Aorta (tissue), 5 donors: ENCODE measurements at regions of chr17 and their contacts with region 1.

Region 1: DNA sequence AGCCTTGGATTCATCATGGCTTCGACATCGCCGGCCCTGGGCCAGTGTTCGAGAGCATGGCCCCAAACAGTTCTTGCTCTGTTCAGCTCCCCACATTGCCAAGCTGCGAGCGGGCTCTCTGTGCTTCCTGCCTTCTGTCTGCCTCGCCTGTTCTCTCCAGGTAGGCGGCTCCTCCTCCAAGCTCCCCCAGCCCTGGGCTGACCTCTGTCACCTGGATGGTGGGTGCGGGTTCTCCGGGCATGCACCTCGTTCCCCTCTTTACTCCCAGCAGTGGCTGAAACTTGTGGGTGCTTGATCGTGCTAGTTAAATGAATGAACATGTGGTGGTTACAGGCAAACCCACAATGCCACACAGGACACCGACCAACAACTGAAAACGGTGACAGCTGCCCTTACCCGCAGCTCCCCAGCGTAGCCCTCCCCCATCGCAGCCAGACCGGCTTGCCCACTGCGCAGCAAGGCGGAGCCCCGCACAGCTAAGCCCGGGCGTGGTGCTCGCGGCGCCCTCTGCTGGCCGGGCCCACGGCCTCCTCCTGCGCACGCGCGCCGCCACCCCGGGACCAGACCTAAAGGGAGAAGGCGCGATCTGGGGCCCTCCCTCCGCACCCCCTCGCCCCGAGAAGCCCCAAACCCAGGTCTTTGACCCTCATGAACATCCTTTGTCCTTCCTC is 23.0 kb upstream of the EIF1 start:
- DNase-seq: peak; percentile 93 to 95
- ATAC-seq: peak; percentile 95
- H3K4me3 ChIP-seq: peak overlapping the region; percentile 5 to 59
- H3K27ac ChIP-seq: peak overlapping the region in 1 of 2 donors; percentile 85
- H3K4me1 ChIP-seq: no peaks in the 10 kb centered on the region
- H3K27me3 ChIP-seq: no peaks in the 10 kb centered on the region

Region 2: DNA sequence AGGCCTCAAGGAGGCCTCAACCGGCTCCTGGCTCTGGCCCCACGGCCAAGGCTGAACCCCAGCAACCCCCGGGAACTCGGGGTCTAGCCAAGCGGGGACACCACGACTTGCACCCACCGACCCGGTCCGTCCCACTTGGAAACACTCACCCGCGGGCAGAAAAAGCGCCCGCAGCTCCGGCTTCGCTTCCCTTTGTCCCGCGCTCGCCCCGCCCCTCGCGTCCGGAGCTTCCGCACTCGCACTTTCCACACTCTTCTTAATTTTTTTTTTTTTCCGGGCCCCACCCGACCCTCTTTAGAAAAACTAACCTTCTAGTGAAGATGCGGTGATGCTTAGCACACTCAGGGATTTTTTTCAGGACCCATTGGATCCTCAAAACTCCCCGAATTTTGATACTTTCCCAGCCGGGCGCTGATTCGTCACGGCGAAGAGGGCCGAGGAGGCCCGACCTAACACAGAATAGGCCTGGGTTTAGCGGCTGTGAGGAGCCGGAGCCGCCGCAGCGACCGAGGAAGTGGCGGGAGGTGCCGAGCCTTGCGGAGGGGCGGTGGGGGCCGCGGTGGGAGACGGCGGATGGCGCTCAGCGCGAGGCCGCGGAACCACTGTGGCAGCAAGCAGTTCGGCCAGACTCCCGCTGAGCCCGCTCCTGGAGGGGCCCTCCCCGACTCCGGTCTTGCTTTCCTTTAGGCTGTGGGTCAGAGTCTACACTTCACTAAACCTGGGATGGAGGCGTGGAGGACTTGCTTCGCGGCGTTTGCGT is 1017.9 kb before region 1 on chr17 and contains the start of gene SMARCE1:
- intact Hi-C with region 1: loop called in 1 of 2 experiments (anchors 10 kb)
- DNase-seq: peak; percentile 75 to 90
- ATAC-seq: peak; percentile 92
- H3K4me3 ChIP-seq: peak within 1 kb of the TSS; percentile 74 to 99
- H3K27ac ChIP-seq: peak within 1 kb of the TSS; percentile 79 to 89
- H3K4me1 ChIP-seq: no peaks in the 10 kb centered on the region
- H3K27me3 ChIP-seq: no peaks in the 10 kb centered on the region
- total RNA-seq, gene SMARCE1: 80.8 to 84.4 TPM

Region 3: GRCh38 chr17:40909351-40909750 is 756.4 kb before region 1 on chr17:
- intact Hi-C with region 1: loop called (anchors 2 kb)
- DNase-seq: peak; percentile 81 to 87
- ATAC-seq: peak; percentile 95
- H3K4me3 ChIP-seq: no peak overlapping the region
- H3K27ac ChIP-seq: no peak overlapping the region
- H3K4me1 ChIP-seq: peaks cover 0 to 7% of the 10 kb centered on the region in 2 donors
- H3K27me3 ChIP-seq: no peaks in the 10 kb centered on the region

Region 4: DNA sequence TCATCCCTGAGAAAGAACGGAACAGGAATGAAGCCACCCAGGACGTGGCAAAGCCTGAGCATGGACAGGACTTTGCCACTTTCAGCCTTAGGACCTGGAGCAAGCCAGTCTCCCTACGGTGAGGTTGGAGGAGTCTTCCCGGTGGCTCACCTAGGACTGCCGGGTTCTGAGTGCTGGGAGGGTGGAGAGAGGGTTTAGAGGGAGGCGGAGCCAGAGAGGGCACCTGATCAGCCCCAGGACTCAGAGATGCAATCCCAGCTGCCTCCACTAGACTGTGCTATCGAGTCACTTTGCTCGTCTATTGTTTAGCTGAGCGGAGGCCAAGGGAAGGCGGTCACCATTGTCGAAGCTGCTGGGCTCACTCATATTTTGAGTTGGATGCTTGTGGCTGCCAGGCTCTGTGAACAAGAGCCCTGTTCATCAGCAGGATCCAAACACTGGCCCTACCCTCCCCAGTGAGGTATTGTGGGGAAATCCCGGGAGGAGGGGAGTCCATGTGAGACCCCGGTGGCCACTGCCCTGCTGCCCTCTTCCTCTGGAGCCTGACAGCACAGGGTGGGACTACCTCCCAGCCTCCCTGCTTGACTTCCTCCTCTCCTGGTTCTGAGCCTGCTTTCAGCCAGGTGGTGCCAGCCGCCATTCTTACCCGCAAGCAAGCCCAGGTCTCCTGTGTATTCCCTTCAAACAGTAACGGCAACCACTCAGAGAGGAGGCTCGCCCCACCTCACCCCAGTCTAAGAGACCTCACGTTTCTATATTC is 86.0 kb before region 1 on chr17:
- intact Hi-C with region 1: loop called in 1 of 2 experiments (anchors 5 kb)
- DNase-seq: peak; percentile 86 to 90
- ATAC-seq: peak; percentile 92
- H3K4me3 ChIP-seq: no peak overlapping the region
- H3K27ac ChIP-seq: no peak overlapping the region
- H3K4me1 ChIP-seq: no peaks in the 10 kb centered on the region
- H3K27me3 ChIP-seq: no peaks in the 10 kb centered on the region

Region 5: DNA sequence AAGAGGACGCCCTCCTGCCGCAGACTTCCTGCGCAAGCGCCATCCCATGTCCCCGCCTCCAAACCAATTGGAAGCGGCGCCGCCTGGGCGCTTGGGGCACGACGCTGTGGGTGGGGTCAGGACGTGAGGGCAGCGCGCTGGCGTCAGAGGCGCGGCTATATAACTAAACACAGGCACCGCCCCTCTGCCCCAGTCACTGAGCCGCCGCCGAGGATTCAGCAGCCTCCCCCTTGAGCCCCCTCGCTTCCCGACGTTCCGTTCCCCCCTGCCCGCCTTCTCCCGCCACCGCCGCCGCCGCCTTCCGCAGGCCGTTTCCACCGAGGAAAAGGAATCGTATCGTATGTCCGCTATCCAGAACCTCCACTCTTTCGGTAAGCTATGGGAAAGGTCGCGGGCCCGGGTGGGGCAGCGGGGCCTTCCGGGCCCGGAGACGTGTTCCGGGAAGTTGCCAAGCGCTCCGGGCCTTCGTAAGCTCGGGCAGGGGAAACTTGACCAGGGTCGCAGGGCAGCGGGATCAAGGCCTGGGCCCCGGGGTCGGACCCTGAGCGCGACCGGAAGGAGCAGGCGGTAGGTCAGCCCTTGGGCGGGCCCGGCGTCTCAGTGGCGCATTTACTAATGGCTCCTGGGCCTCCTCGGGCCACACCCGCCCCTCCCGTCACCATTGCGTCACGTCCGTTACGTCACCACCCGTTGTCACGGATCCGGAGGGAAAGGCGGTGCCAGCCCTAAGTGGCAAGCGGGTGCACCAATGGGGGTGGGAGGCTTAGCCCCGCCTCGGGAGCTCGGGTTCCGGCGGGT is 23.2 kb after region 1 on chr17 and contains the start of gene EIF1:
- intact Hi-C with region 1: loop called in 1 of 2 experiments (anchors 2 kb)
- DNase-seq: peak; percentile 100
- ATAC-seq: peak; percentile 96
- H3K4me3 ChIP-seq: peak within 1 kb of the TSS; percentile 88 to 91
- H3K27ac ChIP-seq: peak within 1 kb of the TSS; percentile 98 to 100
- H3K4me1 ChIP-seq: no peaks in the 10 kb centered on the region
- H3K27me3 ChIP-seq: no peaks in the 10 kb centered on the region
- total RNA-seq, gene EIF1: 582 to 726 TPM

Region 6: DNA sequence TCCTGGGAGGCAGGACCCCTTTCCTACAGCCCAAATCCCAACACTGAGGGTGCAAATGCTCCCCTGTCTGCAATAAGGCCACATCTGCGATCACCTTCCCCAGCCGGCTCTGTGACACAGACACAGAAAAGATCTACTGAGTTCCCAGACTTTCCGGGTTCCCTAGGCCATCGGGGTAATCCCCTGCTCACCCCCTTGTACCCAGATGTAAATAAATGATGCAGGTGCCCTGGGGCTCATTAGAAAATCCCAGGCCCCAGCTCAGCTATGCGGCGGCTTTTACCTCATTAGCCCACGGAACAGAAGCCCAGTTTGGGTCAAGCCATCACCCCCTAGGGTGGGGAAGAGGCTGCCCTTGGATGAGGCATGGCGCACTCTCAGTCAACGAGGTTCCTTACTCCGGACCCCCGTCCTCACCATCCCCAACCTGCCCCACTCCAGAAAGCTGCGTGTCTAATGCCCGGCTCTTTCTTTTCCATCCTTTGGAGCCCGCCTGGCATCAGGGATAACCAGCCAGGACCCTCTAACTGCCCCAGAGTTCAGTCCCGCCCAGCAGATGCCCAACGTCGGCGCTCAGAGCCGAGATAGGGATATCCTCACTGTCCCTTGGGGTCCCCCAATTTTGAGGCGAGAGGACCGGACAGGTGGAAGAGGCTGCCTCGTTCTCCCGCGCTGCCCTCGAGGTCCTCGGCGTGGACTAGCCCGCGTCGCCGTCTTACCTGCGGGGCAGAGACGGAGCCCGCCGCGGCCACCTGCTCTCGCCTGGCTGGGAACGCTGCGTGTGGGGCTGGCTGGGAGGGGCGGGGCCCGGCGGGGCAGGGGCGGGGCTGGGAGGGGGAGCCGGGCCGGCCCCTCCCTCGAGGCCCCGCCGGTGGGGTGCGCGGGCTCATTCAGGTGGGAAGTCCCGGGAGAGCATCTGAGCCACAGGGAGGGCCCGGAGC is 432.3 kb after region 1 on chr17 and contains the start of gene ZNF385C:
- intact Hi-C with region 1: no loop called
- DNase-seq: no peak
- ATAC-seq: no peak
- H3K4me3 ChIP-seq: no peak within 1 kb of the TSS
- H3K27ac ChIP-seq: no peak within 1 kb of the TSS
- H3K4me1 ChIP-seq: no peaks in the 10 kb centered on the region
- H3K27me3 ChIP-seq: no peaks in the 10 kb centered on the region
- total RNA-seq, gene ZNF385C: not detected